Heart right ventricle (tissue), 16 donors: ENCODE measurements at regions of chr22 and their contacts with region 1.

Region 1: GRCh38 chr22:46087336-46088277 is 62.7 kb upstream of the PPARA start:
- DNase-seq: peak; percentile 93
- ATAC-seq: peak; percentile 58 to 81 (median 78)
- H3K4me3 ChIP-seq: peak overlapping the region in 9 of 10 donors; percentile 2 to 93 (median 32)
- H3K27ac ChIP-seq: peak overlapping the region; percentile 84 to 100 (median 98)
- H3K4me1 ChIP-seq: peaks cover 77 to 100% (median 100%) of the 10 kb centered on the region in 9 donors
- H3K27me3 ChIP-seq: no peaks in the 10 kb centered on the region
- CTCF ChIP-seq: peak in 1 of 9 donors; percentile 4

Region 2: GRCh38 chr22:45754822-45755221 is 332.8 kb before region 1 on chr22:
- intact Hi-C with region 1: no loop called
- DNase-seq: no peak
- ATAC-seq: peak in 1 of 8 donors; percentile 26
- H3K4me3 ChIP-seq: no peak overlapping the region
- H3K27ac ChIP-seq: no peak overlapping the region
- H3K4me1 ChIP-seq: peaks cover 0 to 20% (median 7%) of the 10 kb centered on the region in 9 donors
- H3K27me3 ChIP-seq: no peaks in the 10 kb centered on the region
- CTCF ChIP-seq: no peak

Region 3: DNA sequence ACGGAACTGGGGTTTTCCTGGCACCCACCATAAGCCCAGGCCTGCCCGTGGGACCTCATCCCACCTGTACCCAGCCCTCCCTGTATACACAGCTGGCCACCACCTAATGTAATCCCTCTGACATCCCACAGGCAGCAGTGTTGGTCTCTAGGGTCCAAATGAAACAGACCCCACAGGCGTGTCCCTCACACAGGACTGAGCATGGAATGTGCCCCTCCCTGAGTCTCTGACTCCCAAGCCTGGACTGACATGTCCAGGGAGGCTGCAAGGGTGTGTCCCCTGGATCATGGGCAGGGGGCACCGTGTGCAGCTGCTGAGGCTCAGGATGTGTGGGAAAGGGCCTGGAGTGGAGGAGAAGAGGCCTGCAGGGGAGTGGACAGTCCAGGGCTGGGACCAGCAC is 12.1 kb after region 1 on chr22:
- intact Hi-C with region 1: loop called in 2 of 10 experiments (anchors 2 kb)
- DNase-seq: no peak
- ATAC-seq: no peak
- H3K4me3 ChIP-seq: no peak overlapping the region
- H3K27ac ChIP-seq: peak overlapping the region in 7 of 10 donors; percentile 4 to 94 (median 30)
- H3K4me1 ChIP-seq: peaks cover 46 to 98% (median 75%) of the 10 kb centered on the region in 9 donors
- H3K27me3 ChIP-seq: no peaks in the 10 kb centered on the region
- CTCF ChIP-seq: no peak

Region 4: DNA sequence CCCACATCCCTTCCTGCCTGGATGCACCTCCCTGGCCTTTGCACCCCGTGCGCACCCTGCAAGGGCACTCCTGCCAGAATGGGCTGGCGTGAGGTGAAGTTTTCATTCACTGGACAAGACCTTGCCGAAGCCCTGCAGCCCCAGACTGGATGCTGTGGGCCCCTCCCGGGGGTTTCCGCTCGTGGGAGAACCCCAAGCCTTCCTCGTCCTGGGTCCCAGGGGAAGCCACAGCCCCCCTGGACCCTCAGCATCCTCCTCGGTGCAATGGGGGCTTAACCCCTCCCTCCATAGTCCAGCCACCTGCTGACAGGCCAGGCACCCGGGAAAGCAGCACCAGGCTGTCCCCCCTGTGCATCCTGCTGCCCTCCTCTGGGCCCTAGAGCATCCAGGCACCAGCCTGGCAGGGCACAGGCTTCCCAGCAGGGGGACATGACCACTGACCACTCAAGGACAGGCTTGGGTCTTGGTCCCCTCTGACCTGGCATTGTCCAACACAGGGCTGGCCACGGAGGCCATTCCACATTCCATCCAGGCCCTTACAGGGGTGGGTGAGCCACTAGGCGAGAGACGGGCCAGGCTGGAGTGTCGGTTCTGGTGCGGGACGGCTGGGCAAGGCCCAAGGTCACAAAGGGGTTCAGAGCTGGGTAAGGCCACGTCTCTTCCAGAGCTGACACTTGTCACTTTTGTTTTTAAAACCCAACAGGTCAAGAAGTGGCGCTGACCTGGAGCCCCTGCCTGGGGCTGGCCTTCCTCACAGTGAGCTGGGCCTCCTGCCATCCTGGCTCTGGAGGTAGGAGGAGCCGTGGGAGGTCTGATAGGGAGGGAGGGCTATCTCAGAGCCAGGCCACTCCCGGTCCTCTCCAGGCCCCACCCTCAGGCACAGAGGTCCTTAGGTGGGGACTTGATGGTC is 21.2 kb after region 1 on chr22:
- intact Hi-C with region 1: loop called in 1 of 10 experiments (anchors 2 kb)
- DNase-seq: peak; percentile 71 to 73
- ATAC-seq: peak; percentile 15 to 53 (median 36)
- H3K4me3 ChIP-seq: no peak overlapping the region
- H3K27ac ChIP-seq: peak overlapping the region; percentile 16 to 94 (median 86)
- H3K4me1 ChIP-seq: peaks cover 87 to 100% (median 99%) of the 10 kb centered on the region in 9 donors
- H3K27me3 ChIP-seq: no peaks in the 10 kb centered on the region
- CTCF ChIP-seq: no peak